ENCODE measurements at regions of chr12 and their contacts with region 1.

Region 1: DNA sequence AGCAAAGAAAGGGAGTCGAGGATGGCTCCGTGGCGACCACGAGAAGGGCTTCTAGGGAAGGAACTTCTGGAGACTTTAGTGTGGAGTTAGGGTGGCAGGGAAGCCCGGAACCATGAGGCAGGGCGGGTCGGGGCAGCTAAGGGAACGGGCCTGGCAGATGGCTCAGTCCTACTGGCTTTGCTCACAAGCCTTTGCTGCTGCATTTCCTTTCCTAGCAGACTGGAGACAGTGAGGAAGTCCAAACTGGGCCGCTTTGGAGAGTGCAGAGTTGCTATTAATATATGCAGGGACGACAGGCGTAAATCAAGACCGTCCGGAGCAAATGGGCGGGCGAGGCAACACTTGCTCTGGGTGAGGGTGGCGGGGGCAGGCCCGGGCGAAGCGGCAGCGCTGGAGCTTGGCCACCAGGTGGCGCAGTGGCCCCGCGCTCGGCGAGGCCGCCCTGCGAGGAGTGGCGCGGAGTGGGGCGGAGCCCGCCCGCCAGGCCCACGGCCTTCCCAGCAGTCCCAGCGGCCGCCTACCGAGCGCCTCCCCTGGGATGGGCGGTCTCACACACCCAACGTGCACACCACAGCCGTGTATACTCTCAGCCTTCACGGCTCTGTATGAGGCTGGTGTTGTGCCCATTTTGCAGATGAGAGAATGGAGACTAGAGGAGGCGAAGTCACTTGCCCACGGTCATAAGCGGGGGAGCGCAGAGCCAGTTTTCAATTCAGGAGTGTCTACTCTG is 24.4 kb upstream of the LRTM2 start:
- DNase-seq: peak; percentile 95
- ATAC-seq: peak; percentile 97
- H3K4me3 Mint-ChIP-seq: peak overlapping the region; percentile 84
- H3K27ac Mint-ChIP-seq: peak overlapping the region; percentile 87
- H3K4me1 Mint-ChIP-seq: peaks cover 18% of the 10 kb centered on the region
- H3K27me3 Mint-ChIP-seq: no peaks in the 10 kb centered on the region

Region 2: GRCh38 chr12:1634590-1635191 is 161.3 kb before region 1 on chr12:
- CTCF ChIA-PET with region 1: interaction called, 68 read pairs
- DNase-seq: peak; percentile 71
- ATAC-seq: peak; percentile 77
- H3K4me3 Mint-ChIP-seq: no peak overlapping the region
- H3K27ac Mint-ChIP-seq: no peak overlapping the region
- H3K4me1 Mint-ChIP-seq: peaks cover 6% of the 10 kb centered on the region
- H3K27me3 Mint-ChIP-seq: peaks cover 61% of the 10 kb centered on the region

Region 3: DNA sequence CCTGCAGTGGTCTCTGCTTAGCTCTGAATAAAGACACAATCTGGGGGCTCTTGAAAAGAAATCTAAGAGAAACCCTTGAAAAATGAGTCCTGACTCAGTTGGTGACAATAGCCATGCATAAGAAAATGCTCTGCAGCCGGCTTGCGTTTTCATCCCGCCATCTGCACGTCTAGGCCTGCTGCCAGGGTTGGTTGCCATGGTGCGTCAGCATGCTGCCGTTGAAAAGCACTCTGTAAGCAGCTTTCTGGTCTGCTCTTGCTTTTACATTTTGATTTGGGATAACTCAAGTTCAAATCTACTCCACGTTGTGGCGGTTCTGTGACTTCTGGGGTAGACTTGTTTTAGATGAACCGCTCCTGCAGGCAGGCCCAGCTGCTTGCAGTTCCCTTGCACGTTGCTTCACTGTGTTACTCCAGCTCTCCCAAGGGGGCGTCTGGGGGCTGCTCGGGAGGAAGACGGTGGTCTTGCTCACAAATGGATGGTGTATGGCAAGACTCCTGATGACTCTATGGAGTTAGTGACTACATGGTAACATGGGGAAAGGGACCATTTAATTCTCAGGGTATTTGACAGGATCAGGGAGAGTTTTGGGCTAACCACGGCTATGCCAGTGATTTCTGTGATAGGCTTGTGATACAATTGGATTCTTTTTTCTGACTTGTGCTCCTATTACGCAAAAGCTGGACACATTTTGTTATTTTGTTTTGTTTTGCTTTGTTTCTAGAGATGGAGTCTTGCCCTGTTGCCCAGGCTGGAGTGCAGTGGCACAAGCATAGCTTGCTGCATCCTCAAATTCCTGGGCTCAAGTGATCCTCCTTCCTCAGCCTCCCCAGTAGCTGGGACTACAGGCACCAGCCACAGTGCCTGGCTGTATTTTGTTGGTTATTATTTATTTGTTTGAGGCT is 151.2 kb before region 1 on chr12:
- CTCF ChIA-PET with region 1: interaction called, 304 read pairs
- DNase-seq: no peak
- ATAC-seq: no peak
- H3K4me3 Mint-ChIP-seq: no peak overlapping the region
- H3K27ac Mint-ChIP-seq: no peak overlapping the region
- H3K4me1 Mint-ChIP-seq: peaks cover 17% of the 10 kb centered on the region
- H3K27me3 Mint-ChIP-seq: peaks cover 25% of the 10 kb centered on the region

Region 4: DNA sequence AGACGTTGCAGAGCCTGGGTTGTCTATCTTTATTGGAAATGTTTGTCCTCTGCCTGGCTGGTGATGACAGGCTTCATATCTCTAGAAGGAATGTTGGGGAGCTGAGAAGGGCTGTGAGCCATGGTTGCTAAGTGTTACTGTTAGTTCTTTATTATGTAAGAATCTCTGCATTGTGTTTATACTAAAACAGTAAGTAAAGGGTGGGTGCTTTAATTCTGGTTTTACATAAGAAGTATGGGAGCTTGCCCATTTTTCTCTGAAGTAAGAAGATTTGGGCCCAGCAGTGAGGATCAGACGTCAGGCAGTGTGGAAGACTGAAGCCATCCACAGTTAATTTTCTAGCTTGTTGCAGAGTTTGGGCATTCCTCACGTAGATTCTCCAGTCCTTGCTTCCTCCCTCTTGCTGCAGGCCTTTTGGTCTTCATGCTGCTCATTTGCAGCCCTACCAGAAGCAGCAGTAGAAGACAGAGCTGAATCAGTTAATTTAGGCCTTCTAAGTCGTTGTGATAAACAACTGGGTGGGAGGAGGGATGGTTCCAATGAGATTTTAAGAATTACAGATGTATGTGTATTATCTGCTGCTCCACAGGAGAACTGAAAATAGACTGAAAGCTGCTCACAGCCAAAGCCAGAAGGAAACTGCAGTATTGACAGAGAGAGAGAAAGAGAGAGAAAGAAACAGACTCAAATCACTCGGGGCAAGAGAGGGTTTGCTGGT is 145.5 kb before region 1 on chr12:
- CTCF ChIA-PET with region 1: interaction called, 304 read pairs
- DNase-seq: no peak
- ATAC-seq: no peak
- H3K4me3 Mint-ChIP-seq: no peak overlapping the region
- H3K27ac Mint-ChIP-seq: no peak overlapping the region
- H3K4me1 Mint-ChIP-seq: peaks cover 11% of the 10 kb centered on the region
- H3K27me3 Mint-ChIP-seq: peaks cover 42% of the 10 kb centered on the region

Region 5: DNA sequence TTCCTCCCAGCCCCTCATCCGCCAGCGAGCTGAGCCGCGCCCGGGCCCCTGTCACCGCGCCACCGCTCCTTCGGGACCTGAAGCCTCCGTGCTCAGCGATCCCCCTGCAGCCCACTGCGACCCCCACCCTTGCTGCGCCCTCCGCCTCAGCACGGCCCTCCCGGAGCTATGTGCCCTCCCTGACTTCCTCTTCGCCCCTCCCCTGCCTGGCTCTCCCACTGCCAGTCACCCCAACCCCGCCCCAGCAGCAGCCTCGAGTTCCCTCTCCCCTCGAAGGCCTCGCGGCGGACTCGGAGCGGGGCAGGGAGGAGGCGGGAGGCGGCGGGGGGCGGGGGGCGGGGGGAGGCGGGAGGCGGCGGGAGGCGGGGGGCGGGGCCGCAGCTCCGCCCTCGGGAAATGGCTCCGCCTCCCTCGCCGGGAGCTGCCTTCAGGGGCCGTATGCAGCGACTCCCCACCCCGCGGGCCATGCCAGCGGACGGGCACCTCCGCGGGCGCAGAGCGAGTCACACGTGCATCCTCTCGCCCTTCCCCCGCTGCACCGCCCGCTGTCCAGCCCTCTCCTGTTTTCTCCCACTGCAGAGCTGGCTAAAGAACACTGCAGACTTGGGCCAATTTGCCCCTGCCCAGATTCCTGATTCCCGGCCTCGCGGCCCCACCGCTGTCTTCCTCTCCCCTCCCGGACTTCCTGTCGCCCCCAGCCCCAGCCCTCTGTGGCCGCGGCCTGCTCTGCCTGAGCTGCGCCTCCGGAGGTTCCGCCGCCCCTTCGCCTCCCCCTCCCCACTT is 134.2 kb before region 1 on chr12:
- CTCF ChIA-PET with region 1: interaction called, 304 read pairs
- DNase-seq: peak; percentile 94
- ATAC-seq: peak; percentile 94
- H3K4me3 Mint-ChIP-seq: peak overlapping the region; percentile 55
- H3K27ac Mint-ChIP-seq: peak overlapping the region; percentile 78
- H3K4me1 Mint-ChIP-seq: peaks cover 34% of the 10 kb centered on the region
- H3K27me3 Mint-ChIP-seq: peaks cover 2% of the 10 kb centered on the region

Region 6: DNA sequence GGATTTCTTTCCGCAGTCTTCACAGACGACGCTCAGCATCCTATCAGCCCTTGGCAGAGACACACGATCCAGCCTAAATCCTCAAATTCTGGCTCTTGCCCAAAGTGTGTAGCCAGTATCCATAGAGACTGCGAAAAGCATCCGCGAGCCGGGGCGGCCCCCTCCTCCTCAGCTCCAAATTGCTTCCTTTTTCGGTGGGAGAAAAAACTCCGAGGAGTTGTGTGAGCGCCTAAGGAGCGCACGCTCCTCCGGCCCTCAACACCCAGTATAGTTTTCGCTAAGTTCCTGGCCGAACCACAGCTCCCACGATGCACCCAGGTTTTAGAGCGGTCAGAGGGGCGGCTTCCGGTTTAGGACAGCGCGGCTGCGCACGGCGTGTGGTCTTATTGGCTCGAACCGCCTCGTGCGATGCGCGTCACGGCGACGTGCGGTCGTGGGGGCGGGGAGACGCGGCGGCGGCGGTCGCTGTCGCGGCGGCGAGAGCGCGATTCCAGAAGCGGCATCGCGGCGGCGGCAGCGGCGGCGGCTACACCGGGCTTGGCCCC is 105.3 kb before region 1 on chr12 and contains the start of gene ADIPOR2:
- CTCF ChIA-PET with region 1: interaction called, 11 read pairs
- DNase-seq: peak; percentile 96
- ATAC-seq: peak; percentile 97
- H3K4me3 Mint-ChIP-seq: peak within 1 kb of the TSS; percentile 85
- H3K27ac Mint-ChIP-seq: peak within 1 kb of the TSS; percentile 96
- H3K4me1 Mint-ChIP-seq: peaks cover 43% of the 10 kb centered on the region
- H3K27me3 Mint-ChIP-seq: peaks cover 8% of the 10 kb centered on the region
- total RNA-seq, gene ADIPOR2: 63.5 to 83.3 TPM

Region 7: DNA sequence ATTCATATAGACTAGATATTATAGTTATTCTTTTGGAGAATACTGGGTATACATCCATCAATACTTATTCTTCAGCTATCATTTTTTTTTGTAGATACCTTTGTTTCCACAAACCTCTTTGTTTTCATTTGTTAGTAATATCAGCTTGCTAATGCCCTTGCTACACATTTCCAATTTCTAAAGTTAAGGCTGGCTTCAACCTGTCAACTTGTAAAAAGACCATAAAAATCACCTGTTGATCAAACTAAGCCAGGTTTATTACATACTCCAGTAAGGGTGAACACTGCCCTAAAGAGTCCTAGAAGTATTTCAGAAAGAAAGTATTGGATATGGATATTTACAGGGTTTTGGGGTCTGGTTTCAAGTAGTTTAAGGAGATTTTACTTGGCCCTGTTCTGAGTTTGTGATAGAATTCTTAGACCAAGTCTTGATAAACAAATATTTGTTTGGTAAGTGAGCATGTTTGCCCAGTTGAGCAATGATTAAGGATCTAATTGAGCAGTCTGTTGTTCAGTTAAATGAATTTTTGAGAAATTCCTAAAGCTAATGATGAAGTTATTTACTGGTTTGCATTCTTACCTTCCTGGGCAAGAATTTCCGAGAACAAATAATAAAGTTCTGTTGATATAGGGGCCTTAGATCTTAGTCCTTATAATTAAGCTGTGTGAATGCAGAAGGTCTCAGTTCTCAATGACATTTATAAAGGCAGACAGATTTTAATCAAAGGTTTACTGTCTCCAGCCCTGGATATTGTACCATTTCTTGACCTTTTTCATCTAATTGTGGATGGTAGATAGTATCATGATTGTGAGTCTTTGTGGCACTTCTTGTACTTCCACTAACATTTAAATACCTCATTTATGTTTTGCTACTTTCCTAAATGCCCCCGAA is 28.3 kb before region 1 on chr12:
- CTCF ChIA-PET with region 1: interaction called, 12 read pairs
- DNase-seq: no peak
- ATAC-seq: no peak
- H3K4me3 Mint-ChIP-seq: no peak overlapping the region
- H3K27ac Mint-ChIP-seq: no peak overlapping the region
- H3K4me1 Mint-ChIP-seq: no peaks in the 10 kb centered on the region
- H3K27me3 Mint-ChIP-seq: no peaks in the 10 kb centered on the region

Measured in activated CD8-positive, alpha-beta memory T cell treated with anti-CD3 and anti-CD28 coated beads, Interleukin-2, amount 10 ng/mL, durations not matched to agents 7 days and 5 days (primary cell).